Activated CD8-positive, alpha-beta T cell treated with anti-CD3 and anti-CD28 coated beads, Interleukin-2, amount 10 ng/mL, durations not matched to agents 7 days and 5 days (primary cell): ENCODE measurements at regions of chr9 and their contacts with region 1.

Region 1: DNA sequence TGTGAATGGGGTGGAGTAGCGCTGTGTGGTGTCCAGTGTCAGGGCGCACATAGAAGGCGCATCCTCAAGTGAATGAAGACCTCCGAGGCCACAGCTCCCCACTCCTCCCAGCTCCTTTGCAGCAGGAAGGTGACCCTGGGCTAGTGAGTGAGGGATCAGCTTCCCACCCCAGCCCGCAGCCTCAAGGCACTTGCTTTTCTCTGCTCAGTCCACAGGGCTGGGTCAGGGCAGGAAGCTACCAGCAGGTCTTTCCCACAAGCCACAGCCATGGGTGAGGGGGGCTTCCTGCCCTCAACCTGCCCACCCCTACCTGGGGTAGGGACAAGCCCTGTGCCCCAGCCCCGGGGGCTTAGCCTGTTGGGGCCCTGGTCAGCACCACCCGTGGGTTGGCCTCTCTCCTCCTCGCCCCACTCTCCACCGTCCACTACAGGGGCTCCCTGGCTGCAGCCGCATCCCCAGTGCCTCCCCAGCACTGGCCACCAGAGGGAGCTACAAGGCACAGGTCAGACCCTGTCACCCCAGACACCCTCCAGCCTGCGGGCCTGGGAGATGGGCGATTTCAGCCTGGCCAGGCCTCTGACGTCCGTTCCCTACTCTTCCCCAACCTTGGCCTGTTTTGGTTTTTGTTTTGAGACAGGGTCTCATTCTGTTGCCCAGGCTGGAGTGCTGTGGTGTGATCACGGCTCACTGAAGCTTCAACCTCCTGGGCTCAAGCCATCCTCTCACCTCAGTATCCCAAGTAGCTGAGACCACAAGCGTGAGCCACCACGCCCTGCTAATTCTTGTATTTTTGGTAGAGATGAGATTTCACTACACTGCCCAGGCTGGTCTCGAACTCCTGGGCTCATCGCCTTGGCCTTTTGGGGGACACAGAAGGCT is 1.3 kb upstream of the ABCA2 start:
- DNase-seq: peak; percentile 78
- ATAC-seq: peak; percentile 50
- H3K4me3 Mint-ChIP-seq: peak overlapping the region; percentile 71
- H3K27ac Mint-ChIP-seq: peak overlapping the region; percentile 88
- H3K4me1 Mint-ChIP-seq: peaks cover 66% of the 10 kb centered on the region
- H3K27me3 Mint-ChIP-seq: peaks cover 2% of the 10 kb centered on the region

Region 2: GRCh38 chr9:136777359-136777758 is 251.9 kb before region 1 on chr9:
- CTCF ChIA-PET with region 1: interaction called, 10 read pairs
- POLR2A ChIA-PET with region 1: no interaction called
- DNase-seq: no peak
- ATAC-seq: no peak
- H3K4me3 Mint-ChIP-seq: no peak overlapping the region
- H3K27ac Mint-ChIP-seq: no peak overlapping the region
- H3K4me1 Mint-ChIP-seq: peaks cover 6% of the 10 kb centered on the region
- H3K27me3 Mint-ChIP-seq: peaks cover 24% of the 10 kb centered on the region

Region 3: GRCh38 chr9:136965771-136966484 is 63.4 kb before region 1 on chr9:
- CTCF ChIA-PET with region 1: interaction called, 11 read pairs
- POLR2A ChIA-PET with region 1: no interaction called
- DNase-seq: peak; percentile 72
- ATAC-seq: peak; percentile 62
- H3K4me3 Mint-ChIP-seq: peak overlapping the region; percentile 39
- H3K27ac Mint-ChIP-seq: peak overlapping the region; percentile 89
- H3K4me1 Mint-ChIP-seq: peaks cover 39% of the 10 kb centered on the region
- H3K27me3 Mint-ChIP-seq: no peaks in the 10 kb centered on the region

Region 4: GRCh38 chr9:137000177-137000883 is 29.0 kb before region 1 on chr9:
- CTCF ChIA-PET with region 1: interaction called, 43 read pairs
- POLR2A ChIA-PET with region 1: interaction called, 6 read pairs
- DNase-seq: peak; percentile 70
- ATAC-seq: peak; percentile 54
- H3K4me3 Mint-ChIP-seq: peak overlapping the region; percentile 55
- H3K27ac Mint-ChIP-seq: peak overlapping the region; percentile 86
- H3K4me1 Mint-ChIP-seq: peaks cover 60% of the 10 kb centered on the region
- H3K27me3 Mint-ChIP-seq: no peaks in the 10 kb centered on the region

Region 5: GRCh38 chr9:137046098-137046787 is 16.9 kb after region 1 on chr9 and contains the start of gene NPDC1:
- CTCF ChIA-PET with region 1: interaction called, 42 read pairs
- POLR2A ChIA-PET with region 1: interaction called, 3 read pairs
- DNase-seq: peak; percentile 89
- ATAC-seq: peak; percentile 82
- H3K4me3 Mint-ChIP-seq: peak within 1 kb of the TSS; percentile 71
- H3K27ac Mint-ChIP-seq: no peak within 1 kb of the TSS
- H3K4me1 Mint-ChIP-seq: peaks cover 15% of the 10 kb centered on the region
- H3K27me3 Mint-ChIP-seq: peaks cover 28% of the 10 kb centered on the region
- total RNA-seq, gene NPDC1: 20.1 to 29.9 TPM